ENCODE measurements at regions of chr5 and their contacts with region 1.

Region 1: DNA sequence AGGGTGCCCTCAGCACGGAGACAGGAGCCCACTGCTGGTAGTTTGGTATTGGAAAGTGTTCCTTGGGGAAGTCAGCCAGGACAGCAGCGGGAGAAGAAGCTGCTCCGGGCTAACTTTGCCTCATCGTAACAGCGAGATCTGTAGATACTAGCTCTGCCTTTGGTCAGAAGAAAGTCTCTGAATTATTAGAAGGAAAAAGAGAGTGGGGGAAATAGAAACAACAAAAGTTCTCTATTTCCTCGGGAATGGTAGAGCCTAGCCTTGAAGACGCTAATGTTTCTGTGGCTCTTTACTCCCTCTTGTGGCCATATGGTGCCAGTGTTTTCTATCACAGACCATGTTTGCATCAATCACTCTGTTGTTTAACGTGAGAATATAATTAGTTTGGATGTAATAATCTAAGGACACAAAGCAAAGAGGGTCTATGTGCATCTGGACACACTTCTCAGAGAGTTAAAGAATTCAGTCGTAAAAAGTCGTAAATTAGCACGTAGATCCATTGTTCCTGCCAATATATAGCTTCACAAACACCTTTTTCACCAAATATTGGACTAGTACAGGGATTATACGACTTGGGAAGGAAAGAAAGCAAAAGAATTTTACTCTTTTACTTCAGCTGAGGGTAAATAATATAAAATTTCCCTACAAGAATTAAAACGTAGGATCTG is 40.2 kb upstream of the HSD17B4 start:
- DNase-seq: peak; percentile 65
- ATAC-seq: peak; percentile 78
- H3K4me3 ChIP-seq: peak overlapping the region; percentile 62
- H3K27ac ChIP-seq: peak overlapping the region; percentile 52
- H3K4me1 ChIP-seq: peaks cover 29% of the 10 kb centered on the region
- H3K27me3 ChIP-seq: no peaks in the 10 kb centered on the region
- CTCF ChIP-seq: peak; percentile 82 to 93 (median 88)
- EP300 ChIP-seq: no peak
- POLR2A ChIP-seq: no peak
- RAD21 ChIP-seq: peak; percentile 99

Region 2: DNA sequence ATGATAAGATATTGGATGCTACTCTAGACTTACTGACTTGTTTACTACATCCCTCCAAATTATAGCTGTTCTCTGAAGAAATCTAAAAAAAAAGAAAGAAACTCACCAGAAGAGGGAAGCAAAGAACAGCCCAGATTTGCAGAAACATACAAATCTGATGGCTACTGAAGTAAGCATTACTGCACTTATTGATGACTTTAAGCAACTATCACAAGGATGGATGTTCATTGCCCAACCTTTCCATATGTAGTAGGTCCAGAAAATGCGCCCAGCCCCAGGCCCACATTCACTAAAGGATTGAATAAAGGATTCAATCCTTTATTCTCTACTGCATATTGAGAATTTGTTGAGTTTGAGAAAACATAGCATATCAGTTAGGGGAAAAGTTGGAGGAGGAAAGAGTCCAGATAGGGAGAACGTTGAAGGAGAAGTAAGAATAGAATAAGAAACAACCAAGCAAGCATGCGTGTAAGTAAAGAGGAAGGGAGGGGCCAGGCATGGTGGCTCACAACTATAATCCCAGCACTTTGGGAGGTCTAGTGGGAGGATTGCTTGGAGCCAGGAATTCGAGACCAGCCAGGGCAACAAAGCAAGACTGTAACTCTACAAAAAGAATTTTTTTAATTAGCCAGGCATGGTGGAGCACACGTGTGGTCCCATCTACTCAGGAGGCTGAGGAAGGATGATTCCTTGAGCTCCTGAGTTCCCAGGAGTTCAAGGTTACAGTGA is 389.9 kb before region 1 on chr5:
- CTCF ChIA-PET with region 1: interaction called, 143 read pairs
- POLR2A ChIA-PET with region 1: interaction called, 3 read pairs
- RAD21 ChIA-PET with region 1: interaction called, 84 read pairs
- SMC1A ChIA-PET with region 1: interaction called, 91 read pairs
- in situ Hi-C with region 1: loop called (anchors 5 kb)
- intact Hi-C with region 1: loop called (anchors 1 kb)
- DNase-seq: no peak
- ATAC-seq: peak; percentile 87
- H3K4me3 ChIP-seq: no peak overlapping the region
- H3K27ac ChIP-seq: no peak overlapping the region
- H3K4me1 ChIP-seq: peaks cover 12% of the 10 kb centered on the region; the same call in 1 of the 2 replicates
- H3K27me3 ChIP-seq: no peaks in the 10 kb centered on the region
- CTCF ChIP-seq: peak; percentile 49 to 69 (median 54); a peak in 5 of 6 replicates
- EP300 ChIP-seq: no peak
- POLR2A ChIP-seq: no peak
- RAD21 ChIP-seq: peak; percentile 92

Region 3: DNA sequence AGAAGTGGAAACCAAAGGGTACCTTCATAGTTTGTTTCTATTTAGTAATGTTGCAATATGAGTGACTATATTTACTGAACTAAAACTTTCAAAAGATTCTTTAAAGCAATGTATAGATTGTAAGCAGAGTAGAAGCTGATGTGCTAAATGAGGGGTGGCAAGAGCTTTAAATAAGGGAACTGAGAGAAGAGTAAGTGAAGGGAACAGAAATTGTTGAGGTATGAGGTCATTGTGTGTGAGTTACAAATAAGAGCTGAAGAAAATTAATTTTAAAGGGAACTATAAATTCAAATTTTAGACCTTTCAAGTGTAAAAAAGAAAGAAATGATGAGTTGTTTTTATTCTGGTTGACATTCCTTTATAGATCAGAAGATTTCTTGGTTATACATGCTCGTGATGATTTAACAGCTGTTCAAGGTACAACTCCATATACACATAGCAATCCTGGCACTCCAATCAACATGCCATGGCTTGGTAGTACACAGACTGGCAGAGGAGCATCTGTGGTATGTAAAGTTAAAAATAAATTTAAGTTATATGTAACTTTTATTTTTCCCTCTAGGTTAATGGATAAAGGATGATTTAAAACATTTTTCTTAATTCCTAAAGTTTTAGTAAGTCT is 191.4 kb before region 1 on chr5:
- CTCF ChIA-PET with region 1: interaction called, 17 read pairs
- POLR2A ChIA-PET with region 1: no interaction called
- RAD21 ChIA-PET with region 1: interaction called, 12 read pairs
- SMC1A ChIA-PET with region 1: interaction called, 12 read pairs
- in situ Hi-C with region 1: no loop called
- intact Hi-C with region 1: no loop called
- DNase-seq: no peak
- ATAC-seq: peak; percentile 97
- H3K4me3 ChIP-seq: no peak overlapping the region
- H3K27ac ChIP-seq: no peak overlapping the region
- H3K4me1 ChIP-seq: peaks cover 6% of the 10 kb centered on the region; the same call in 1 of the 2 replicates
- H3K27me3 ChIP-seq: no peaks in the 10 kb centered on the region
- CTCF ChIP-seq: no peak
- EP300 ChIP-seq: no peak
- POLR2A ChIP-seq: no peak
- RAD21 ChIP-seq: no peak

Region 4: DNA sequence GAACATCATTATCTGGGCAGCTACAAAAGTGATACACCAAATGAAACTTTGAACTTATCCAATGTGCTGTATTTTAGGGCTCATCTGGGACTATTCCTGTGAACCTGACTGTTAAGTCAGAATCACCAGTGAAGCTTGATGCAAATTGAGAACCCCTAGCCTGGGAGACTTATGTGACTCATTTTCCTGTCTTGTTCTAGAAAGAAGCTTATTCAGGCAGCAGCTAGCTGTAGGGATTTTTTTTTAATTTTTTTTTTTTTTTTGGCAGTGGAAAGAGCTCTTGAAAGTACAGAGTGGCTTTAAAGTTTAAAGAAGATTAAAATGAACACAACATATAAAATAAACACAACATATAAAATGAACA is 137.3 kb before region 1 on chr5:
- CTCF ChIA-PET with region 1: interaction called, 24 read pairs
- POLR2A ChIA-PET with region 1: interaction called, 3 read pairs
- RAD21 ChIA-PET with region 1: interaction called, 42 read pairs
- SMC1A ChIA-PET with region 1: interaction called, 21 read pairs
- in situ Hi-C with region 1: no loop called
- intact Hi-C with region 1: loop called (anchors 2 kb)
- DNase-seq: no peak
- ATAC-seq: peak; percentile 23
- H3K4me3 ChIP-seq: peak overlapping the region; percentile 65; the same call in 1 of the 2 replicates
- H3K27ac ChIP-seq: peak overlapping the region; percentile 77
- H3K4me1 ChIP-seq: peaks cover 66% of the 10 kb centered on the region
- H3K27me3 ChIP-seq: no peaks in the 10 kb centered on the region
- CTCF ChIP-seq: no peak
- EP300 ChIP-seq: no peak
- POLR2A ChIP-seq: no peak
- RAD21 ChIP-seq: no peak

Region 5: DNA sequence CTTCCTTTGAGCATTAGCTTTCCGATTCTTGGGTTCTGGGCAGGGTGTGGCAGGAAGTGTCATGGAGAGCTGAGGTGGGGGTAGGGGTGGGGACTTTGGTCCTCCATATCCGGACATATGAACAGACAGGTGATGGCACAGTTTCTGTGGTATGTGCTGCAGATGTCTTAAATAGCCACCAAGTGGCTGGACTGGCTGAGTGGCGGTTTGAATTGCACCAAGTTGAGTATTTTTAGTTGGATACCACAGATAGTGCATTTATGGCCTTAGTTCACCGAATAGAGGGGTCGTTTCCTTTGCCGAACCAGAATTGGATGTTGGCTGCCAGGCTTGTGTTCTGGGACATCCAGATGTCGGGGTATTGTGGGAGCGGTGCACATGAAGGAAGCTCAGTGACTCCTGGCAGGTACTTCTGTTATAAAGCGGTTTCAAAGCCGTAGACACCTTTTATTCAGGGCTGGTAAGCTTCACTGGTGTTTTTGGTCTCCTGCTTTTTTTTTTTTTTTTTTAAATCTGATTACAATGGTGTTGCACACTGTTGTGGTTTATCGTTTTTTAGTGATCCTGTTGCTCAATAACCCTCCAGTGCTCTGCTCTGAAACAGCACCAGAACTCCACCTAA is 71.4 kb before region 1 on chr5:
- CTCF ChIA-PET with region 1: interaction called, 261 read pairs
- POLR2A ChIA-PET with region 1: interaction called, 8 read pairs
- RAD21 ChIA-PET with region 1: interaction called, 232 read pairs
- SMC1A ChIA-PET with region 1: interaction called, 583 read pairs
- in situ Hi-C with region 1: no loop called
- intact Hi-C with region 1: no loop called
- DNase-seq: peak; percentile 91
- ATAC-seq: peak; percentile 73
- H3K4me3 ChIP-seq: peak overlapping the region; percentile 78
- H3K27ac ChIP-seq: peak overlapping the region; percentile 100
- H3K4me1 ChIP-seq: peaks cover 69% of the 10 kb centered on the region
- H3K27me3 ChIP-seq: no peaks in the 10 kb centered on the region
- CTCF ChIP-seq: 0 out of 6 replicates have a peak, but pooled peaks of 1 of the 3 experiments have one; percentile 20
- EP300 ChIP-seq: peak; percentile 55 to 86; a peak in 3 of 4 replicates
- POLR2A ChIP-seq: peak; percentile 50; the same call in 1 of the 2 replicates
- RAD21 ChIP-seq: peak; percentile 30; the same call in 1 of the 2 replicates

Region 6: GRCh38 chr5:119367502-119368237 is 44.4 kb before region 1 on chr5:
- CTCF ChIA-PET with region 1: interaction called, 167 read pairs
- POLR2A ChIA-PET with region 1: interaction called, 8 read pairs
- RAD21 ChIA-PET with region 1: interaction called, 15 read pairs
- SMC1A ChIA-PET with region 1: interaction called, 214 read pairs
- in situ Hi-C with region 1: no loop called
- intact Hi-C with region 1: no loop called
- DNase-seq: peak; percentile 81
- ATAC-seq: peak; percentile 72
- H3K4me3 ChIP-seq: peak overlapping the region; percentile 59
- H3K27ac ChIP-seq: peak overlapping the region; percentile 95
- H3K4me1 ChIP-seq: peaks cover 44% of the 10 kb centered on the region
- H3K27me3 ChIP-seq: no peaks in the 10 kb centered on the region
- CTCF ChIP-seq: no peak
- EP300 ChIP-seq: peak; percentile 92 to 95
- POLR2A ChIP-seq: no peak
- RAD21 ChIP-seq: 0 out of 2 replicates have a peak, but pooled peaks have one; percentile 8

Region 7: GRCh38 chr5:119397518-119398380 is 14.3 kb before region 1 on chr5:
- CTCF ChIA-PET with region 1: interaction called, 80 read pairs
- POLR2A ChIA-PET with region 1: interaction called, 7 read pairs
- RAD21 ChIA-PET with region 1: interaction called, 17 read pairs
- SMC1A ChIA-PET with region 1: interaction called, 61 read pairs
- in situ Hi-C with region 1: no loop called
- intact Hi-C with region 1: no loop called
- DNase-seq: peak; percentile 81
- ATAC-seq: peak; percentile 73
- H3K4me3 ChIP-seq: 0 out of 2 replicates have a peak overlapping the region, but pooled peaks have one; percentile 1
- H3K27ac ChIP-seq: peak overlapping the region; percentile 83
- H3K4me1 ChIP-seq: peaks cover 65% of the 10 kb centered on the region
- H3K27me3 ChIP-seq: no peaks in the 10 kb centered on the region
- CTCF ChIP-seq: no peak
- EP300 ChIP-seq: peak; percentile 93 to 94
- POLR2A ChIP-seq: no peak
- RAD21 ChIP-seq: no peak

Measured in GM12878 (cell line).